ENCODE measurements at regions of chr16 and their contacts with region 1.

Region 1: GRCh38 chr16:4957720-4958509 is at the start of gene SEC14L5:
- DNase-seq: peak; percentile 100
- ATAC-seq: peak; percentile 88 to 94 (median 90)
- H3K4me3 ChIP-seq: peak within 1 kb of the TSS in 3 of 4 donors; percentile 10 to 49 (median 35)
- H3K27ac ChIP-seq: peak within 1 kb of the TSS; percentile 39 to 88 (median 58)
- H3K4me1 ChIP-seq: peaks cover 0 to 3% (median 0%) of the 10 kb centered on the region in 3 donors
- H3K27me3 ChIP-seq: no peaks in the 10 kb centered on the region
- CTCF ChIP-seq: no peak
- total RNA-seq, gene SEC14L5: 0.22 to 0.79 (median 0.62) TPM

Region 2: GRCh38 chr16:4616047-4616811 is 341.7 kb before region 1 on chr16:
- intact Hi-C with region 1: loop called in 1 of 3 experiments (anchors 10 kb)
- DNase-seq: peak; percentile 98 to 100 (median 100)
- ATAC-seq: peak; percentile 81 to 90 (median 84)
- H3K4me3 ChIP-seq: peak overlapping the region; percentile 26 to 61 (median 48)
- H3K27ac ChIP-seq: peak overlapping the region; percentile 95 to 98 (median 96)
- H3K4me1 ChIP-seq: peaks cover 17 to 24% (median 19%) of the 10 kb centered on the region in 3 donors
- H3K27me3 ChIP-seq: no peaks in the 10 kb centered on the region
- CTCF ChIP-seq: no peak

Region 3: DNA sequence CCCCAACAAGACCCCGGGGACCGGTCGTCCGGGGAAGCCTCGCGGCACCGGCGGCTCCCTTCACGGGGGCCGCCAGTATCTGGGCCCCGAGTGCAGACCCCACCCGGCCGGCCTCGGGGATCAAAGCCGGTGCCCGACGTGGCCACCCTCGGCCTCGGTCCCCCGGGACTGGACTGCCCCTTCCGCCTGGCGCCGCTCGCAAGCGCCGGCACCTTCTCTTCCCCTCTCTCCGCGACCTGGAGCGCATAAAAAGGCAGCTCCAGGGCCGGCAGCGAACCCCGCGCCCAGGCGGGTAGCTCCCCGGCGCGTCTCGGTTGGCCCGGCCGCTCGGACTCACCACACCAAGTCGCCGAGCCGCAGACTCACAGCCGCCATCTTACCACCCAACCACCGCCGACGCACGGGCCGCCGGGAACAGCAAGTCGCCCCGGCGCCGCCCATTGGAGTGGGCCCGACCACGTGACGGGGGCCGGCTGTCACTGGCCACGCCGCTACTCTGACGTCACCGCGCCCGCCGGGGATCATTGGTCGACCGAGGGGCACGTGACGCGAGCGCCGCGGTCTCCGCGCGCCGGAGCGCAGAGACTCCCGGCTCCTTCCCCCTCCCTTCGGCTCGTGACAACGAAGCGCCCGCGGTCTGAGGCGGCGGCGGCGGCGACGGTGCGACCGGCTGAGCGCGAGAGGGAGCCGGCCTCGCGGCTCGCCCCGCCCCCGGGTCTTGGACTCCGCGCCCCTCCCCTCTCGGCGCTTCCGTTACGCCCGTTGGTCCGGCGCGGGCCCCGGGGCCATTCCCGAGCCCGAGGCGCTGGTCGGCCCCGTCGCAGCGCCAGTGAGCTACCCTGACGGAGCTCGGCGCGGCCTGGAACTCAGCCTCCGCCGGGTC is 110.8 kb before region 1 on chr16 and contains the starts of genes GLYR1 and UBN1:
- intact Hi-C with region 1: loop called in 1 of 3 experiments (anchors 10 kb)
- DNase-seq: peak; percentile 99 to 100 (median 100)
- ATAC-seq: peak; percentile 94 to 98 (median 94)
- H3K4me3 ChIP-seq: peak within 1 kb of the TSS; percentile 76 to 98 (median 93)
- H3K27ac ChIP-seq: peak within 1 kb of the TSS; percentile 90 to 97 (median 94)
- H3K4me1 ChIP-seq: peaks cover 17 to 43% (median 22%) of the 10 kb centered on the region in 3 donors
- H3K27me3 ChIP-seq: no peaks in the 10 kb centered on the region
- CTCF ChIP-seq: no peak
- total RNA-seq, gene GLYR1: 27.2 to 58.6 (median 40.4) TPM
- total RNA-seq, gene UBN1: 10.4 to 17.3 (median 12.4) TPM

Measured in pancreas (tissue), 10 donors.